WTC11 (cell line): ENCODE measurements at regions of chr16 and their contacts with region 1.

Region 1: DNA sequence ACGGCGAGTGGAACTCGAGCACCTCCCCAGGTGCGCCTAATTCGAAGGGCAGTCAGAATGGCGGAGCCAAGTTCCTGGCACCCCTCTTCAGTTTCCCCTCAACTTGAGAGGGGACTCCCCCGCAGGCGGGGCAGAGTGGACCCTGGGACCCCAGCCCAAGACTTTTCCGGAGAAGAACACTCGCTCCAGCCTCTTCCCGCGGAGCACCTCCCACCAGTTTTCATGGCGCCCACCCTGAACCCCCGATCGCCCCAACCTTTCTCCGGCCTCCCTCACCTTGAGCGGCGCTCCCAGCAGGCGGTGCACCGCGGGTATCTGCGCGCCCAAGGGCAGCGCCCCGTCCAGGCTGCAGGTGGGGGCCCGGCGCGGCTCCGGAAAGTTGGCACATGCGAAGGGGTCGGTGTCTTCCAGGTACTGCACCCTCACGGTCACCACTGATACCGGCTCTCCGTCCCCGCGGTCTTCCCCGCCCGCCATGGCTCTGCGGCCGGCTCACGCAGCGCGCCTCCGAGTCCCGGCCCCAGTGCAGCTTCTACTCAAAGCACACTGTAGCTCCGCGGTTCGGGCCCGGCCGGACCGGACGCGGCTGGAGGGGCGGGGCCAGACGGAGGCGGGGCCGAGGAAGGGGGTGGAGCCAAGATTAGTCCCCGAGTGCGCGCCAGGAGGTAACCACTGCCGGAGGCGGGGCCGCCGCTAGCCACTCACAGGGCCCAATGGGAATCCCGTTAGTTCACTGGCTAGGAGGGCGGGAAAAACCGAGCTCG is at the start of gene FHOD1:
- DNase-seq: peak; percentile 99
- ATAC-seq: peak; percentile 61
- H3K4me3 Mint-ChIP-seq: peak within 1 kb of the TSS; percentile 89
- H3K27ac Mint-ChIP-seq: peak within 1 kb of the TSS; percentile 85
- H3K4me1 Mint-ChIP-seq: peaks cover 34% of the 10 kb centered on the region
- H3K27me3 Mint-ChIP-seq: peaks cover 40% of the 10 kb centered on the region
- CTCF ChIP-seq: no peak
- total RNA-seq, gene FHOD1: 68.9 to 81.3 TPM (median 71.5 TPM) in 3 replicates

Region 2: DNA sequence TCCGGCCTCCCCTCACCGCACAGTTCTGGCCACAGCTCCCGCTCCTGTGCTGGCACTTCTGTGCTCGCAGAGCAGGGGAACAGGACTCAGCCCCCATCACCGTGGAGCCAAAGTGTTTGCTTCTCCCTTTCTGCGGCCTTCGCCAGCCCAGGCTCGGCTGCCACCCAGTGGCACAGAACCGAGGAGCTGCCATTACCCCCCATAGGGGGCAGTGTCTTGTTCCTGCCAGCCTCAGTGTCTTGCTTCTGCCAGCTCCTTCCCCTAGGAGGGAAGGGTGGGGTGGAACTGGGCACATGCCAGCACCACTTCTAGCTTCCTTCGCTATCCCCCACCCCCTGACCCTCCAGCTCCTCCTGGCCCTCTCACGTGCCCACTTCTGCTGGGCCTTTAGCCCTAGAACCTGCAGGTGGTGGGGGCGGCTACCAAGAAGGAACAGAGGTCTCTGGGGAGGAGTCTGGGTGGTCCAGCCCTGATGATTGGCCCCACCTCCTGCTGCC is 48.8 kb before region 1 on chr16:
- CTCF ChIA-PET with region 1: interaction called, 55 read pairs
- POLR2A ChIA-PET with region 1: interaction called, 3 read pairs
- DNase-seq: peak; percentile 53
- ATAC-seq: peak; percentile 13
- H3K4me3 Mint-ChIP-seq: peak overlapping the region; percentile 55
- H3K27ac Mint-ChIP-seq: peak overlapping the region; percentile 85; the same call in 1 of the 2 replicates
- H3K4me1 Mint-ChIP-seq: peaks cover 13% of the 10 kb centered on the region
- H3K27me3 Mint-ChIP-seq: no peaks in the 10 kb centered on the region
- CTCF ChIP-seq: no peak

Region 3: DNA sequence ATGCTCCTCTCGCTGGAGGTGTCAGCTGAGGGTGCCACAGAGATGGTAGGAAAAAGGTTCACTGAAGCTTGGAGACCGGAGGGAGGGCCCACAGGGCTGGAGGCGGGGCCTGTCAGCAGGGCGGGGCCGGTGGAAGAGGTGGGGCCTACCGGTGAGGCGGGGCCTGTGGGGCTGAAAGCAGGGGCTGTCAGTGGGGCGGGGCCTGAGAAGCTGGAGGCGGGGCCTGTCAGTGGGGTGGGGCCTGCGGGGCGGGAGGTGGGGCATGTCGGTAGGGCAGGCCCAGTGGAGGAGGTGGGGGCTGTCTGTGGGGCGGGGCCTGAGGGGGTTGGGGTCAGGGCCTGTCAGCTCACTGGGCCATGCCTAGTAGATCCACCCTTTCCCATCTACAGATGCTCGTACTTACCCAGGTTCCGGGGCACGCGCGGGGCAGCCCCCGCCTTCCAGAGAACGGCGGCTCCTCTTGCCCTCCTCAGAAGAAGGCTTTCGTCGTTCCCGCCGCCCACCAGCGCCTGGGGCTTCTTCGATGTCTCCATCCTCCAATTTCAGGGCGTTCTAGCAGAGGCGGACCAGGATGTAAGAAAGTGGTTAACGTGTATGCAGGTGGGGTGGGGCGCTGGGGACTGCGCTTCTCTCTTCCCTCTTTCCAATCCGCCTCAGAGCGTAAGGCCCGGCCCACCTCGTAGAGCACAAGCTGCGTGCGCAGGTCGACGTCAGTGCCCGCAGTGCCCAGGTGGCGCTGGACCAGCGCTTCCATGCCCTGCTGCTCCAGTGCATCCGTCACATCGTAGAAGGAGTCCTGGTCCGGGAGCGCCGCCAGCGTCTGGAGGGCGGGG is 10.3 kb before region 1 on chr16:
- CTCF ChIA-PET with region 1: interaction called, 41 read pairs
- POLR2A ChIA-PET with region 1: interaction called, 26 read pairs
- DNase-seq: peak; percentile 96
- ATAC-seq: peak; percentile 93
- H3K4me3 Mint-ChIP-seq: peak overlapping the region; percentile 43; the same call in 1 of the 2 replicates
- H3K27ac Mint-ChIP-seq: peak overlapping the region; percentile 80
- H3K4me1 Mint-ChIP-seq: peaks cover 17% of the 10 kb centered on the region
- H3K27me3 Mint-ChIP-seq: no peaks in the 10 kb centered on the region
- CTCF ChIP-seq: no peak

Region 4: GRCh38 chr16:67269766-67270165 is 22.6 kb after region 1 on chr16:
- CTCF ChIA-PET with region 1: interaction called, 30 read pairs
- POLR2A ChIA-PET with region 1: interaction called, 4 read pairs
- DNase-seq: no peak
- ATAC-seq: peak; percentile 60
- H3K4me3 Mint-ChIP-seq: no peak overlapping the region
- H3K27ac Mint-ChIP-seq: no peak overlapping the region
- H3K4me1 Mint-ChIP-seq: no peaks in the 10 kb centered on the region
- H3K27me3 Mint-ChIP-seq: peaks cover 2% of the 10 kb centered on the region; the same call in 1 of the 2 replicates
- CTCF ChIP-seq: no peak

Region 5: DNA sequence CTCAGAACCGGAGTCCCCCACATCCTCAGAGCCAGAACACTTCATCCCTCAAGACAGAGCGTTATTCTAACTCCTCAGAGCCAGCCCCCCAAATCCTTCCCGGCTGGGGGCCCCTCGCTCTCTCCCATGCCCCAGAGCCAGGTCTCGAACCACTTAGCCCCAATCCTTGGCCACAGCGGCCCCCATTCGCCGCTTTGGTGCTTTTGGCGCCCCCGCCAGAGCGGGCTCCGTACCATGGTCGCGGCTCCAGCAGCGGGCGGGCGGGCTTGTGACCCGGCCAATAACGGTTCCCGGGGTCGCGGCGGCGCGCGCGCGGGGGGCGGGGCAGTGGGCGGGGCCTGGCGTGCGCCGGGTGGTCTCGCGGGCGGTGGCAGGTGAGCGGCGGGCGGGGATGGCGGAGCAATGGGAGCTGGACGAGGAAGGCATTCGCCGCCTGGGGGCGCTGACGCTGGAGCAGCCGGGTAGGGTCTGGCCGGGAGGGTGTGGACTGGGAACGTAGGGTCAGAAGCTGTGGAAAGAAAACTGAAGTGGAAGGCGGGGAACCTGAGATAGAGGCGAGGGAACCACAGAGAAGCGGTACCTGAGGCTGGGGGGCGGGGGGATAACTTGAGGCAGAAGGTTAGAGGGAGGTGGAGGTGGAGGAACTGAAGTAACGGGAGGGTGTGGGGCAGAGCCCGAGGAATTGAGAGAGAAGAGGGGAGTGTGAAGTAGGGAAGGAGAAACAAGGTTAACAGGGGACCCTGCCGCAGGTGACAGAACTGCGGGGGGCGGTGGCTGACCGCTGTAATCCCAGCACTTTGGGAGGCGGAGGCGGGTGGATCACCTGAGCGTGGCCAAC is 79.6 kb after region 1 on chr16 and contains the starts of genes KCTD19 and LRRC36:
- CTCF ChIA-PET with region 1: interaction called, 35 read pairs
- POLR2A ChIA-PET with region 1: no interaction called
- DNase-seq: peak; percentile 98
- ATAC-seq: peak; percentile 99
- H3K4me3 Mint-ChIP-seq: peak within 1 kb of the TSS; percentile 83
- H3K27ac Mint-ChIP-seq: no peak within 1 kb of the TSS
- H3K4me1 Mint-ChIP-seq: peaks cover 3% of the 10 kb centered on the region
- H3K27me3 Mint-ChIP-seq: peaks cover 56% of the 10 kb centered on the region
- CTCF ChIP-seq: peak; percentile 49
- total RNA-seq, gene KCTD19: 0.85 to 1.1 TPM (median 0.85 TPM) in 3 replicates
- total RNA-seq, gene LRRC36: 0.13 to 0.39 TPM (median 0.18 TPM) in 3 replicates